Ascending aorta (tissue), 2 donors: ENCODE measurements at regions of chr19 and their contacts with region 1.

Region 1: GRCh38 chr19:35775298-35776110 is at the start of gene ARHGAP33:
- DNase-seq: peak; percentile 96 to 99
- H3K4me3 ChIP-seq: peak within 1 kb of the TSS; percentile 84 to 88
- H3K27ac ChIP-seq: peak within 1 kb of the TSS; percentile 59 to 61
- H3K4me1 ChIP-seq: peaks cover 5 to 14% of the 10 kb centered on the region in 2 donors
- H3K27me3 ChIP-seq: no peaks in the 10 kb centered on the region
- CTCF ChIP-seq: no peak
- total RNA-seq, gene ARHGAP33: 8.7 TPM

Region 2: DNA sequence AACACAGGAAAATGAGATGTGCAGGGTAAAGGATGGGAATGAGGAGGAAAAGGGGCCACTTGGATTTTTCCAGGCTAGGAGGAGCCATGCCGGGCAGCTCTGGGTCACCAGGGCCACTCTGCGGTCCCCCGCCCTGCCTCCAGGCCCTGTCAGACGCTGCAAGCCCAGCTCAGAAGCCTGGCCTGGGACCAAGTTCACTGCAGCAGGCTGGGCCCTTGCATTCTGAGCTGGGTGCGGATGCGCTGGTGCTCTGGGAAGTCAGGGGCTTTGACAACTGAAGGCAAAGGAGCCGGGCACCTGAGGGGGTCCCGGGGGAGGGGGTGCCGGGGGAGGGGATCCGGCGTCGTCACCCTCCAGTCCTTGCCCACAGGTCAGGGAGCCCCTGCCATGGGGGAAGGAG is 1216.5 kb before region 1 on chr19:
- intact Hi-C with region 1: no loop called
- DNase-seq: no peak
- H3K4me3 ChIP-seq: no peak overlapping the region
- H3K27ac ChIP-seq: no peak overlapping the region
- H3K4me1 ChIP-seq: no peaks in the 10 kb centered on the region
- H3K27me3 ChIP-seq: no peaks in the 10 kb centered on the region
- CTCF ChIP-seq: no peak

Region 3: DNA sequence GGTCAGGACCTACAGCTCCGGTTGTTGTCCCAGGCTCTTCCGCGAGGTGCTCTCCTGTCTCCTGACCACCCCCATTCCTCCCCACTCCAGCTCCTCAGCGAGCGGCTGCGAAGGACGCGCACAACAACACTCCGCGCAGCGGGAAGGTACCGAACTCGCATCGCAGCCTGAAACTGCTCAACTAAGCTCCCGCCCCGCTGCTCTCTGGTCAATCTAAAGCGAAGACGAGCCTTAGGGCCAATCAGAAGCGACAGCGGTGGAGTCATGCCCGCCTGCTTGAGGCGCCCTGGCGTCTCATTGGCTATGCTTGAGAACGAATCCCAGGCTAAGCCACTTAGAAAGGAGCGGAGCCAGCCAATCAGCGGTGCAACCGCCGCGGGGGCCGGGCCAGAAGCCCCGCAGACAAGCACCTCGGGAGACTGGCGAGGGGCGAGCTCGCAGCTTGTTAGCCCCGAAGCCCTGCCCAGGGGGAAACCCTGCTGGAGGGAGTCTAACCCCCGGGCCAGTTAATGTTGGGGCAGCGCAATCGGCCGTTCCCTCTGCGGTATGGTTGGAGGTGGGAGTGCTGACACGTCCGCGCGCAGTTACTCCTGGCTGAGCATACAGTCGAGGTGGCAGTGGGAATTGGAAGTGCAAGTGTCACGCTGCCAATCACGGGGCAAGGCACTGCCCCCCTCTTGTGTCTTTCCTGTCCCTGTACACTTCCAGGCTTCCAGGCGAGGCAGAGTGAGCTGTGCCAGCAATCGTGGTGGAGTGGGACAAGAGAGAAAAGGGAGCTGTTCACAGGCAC is 73.1 kb before region 1 on chr19:
- intact Hi-C with region 1: loop called (anchors 5 kb)
- DNase-seq: peak; percentile 94 to 98
- H3K4me3 ChIP-seq: peak overlapping the region; percentile 64 to 65
- H3K27ac ChIP-seq: no peak overlapping the region
- H3K4me1 ChIP-seq: peaks cover 2 to 3% of the 10 kb centered on the region in 2 donors
- H3K27me3 ChIP-seq: no peaks in the 10 kb centered on the region
- CTCF ChIP-seq: no peak

Region 4: GRCh38 chr19:35748106-35749020 is 27.1 kb before region 1 on chr19 and contains the start of gene LIN37:
- intact Hi-C with region 1: loop called (anchors 2 kb)
- DNase-seq: peak; percentile 99 to 100
- H3K4me3 ChIP-seq: peak within 1 kb of the TSS; percentile 82 to 91
- H3K27ac ChIP-seq: peak within 1 kb of the TSS; percentile 75 to 84
- H3K4me1 ChIP-seq: peaks cover 5 to 26% of the 10 kb centered on the region in 2 donors
- H3K27me3 ChIP-seq: no peaks in the 10 kb centered on the region
- CTCF ChIP-seq: no peak
- total RNA-seq, gene LIN37: 29.9 TPM

Region 5: DNA sequence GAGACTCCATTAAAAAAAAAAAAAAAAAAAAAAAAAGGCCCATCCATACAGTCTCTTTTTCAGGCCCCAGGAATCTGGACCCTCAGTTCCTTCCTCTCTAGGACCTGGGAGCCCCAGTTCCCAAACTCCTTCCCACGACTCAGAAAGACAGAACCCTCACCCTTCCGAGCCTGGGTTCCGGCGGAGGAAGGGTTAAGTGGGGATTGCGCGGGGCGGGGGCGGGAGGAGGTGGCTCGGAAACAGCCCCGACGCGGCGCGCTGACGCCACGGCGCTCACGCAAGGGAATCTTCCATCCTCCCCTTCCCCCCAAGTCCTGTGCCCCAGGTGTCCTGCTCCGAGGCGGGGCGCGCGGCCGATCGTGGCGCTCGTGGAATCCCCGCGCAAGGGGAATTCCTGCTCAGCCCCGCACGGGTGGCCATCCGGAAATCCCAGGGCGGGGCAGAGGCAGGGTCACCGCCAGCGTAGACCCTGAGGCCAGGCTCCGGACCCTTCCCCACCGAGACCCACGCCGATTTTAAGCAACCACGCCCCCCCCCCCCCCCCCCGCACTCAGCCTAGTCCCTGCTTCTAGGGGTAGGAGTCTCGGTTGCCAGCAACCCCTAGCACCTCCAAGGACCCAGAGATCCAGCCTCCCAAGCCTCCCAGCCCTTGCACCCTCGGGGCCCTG is 124.2 kb after region 1 on chr19:
- intact Hi-C with region 1: loop called (anchors 10 kb)
- DNase-seq: peak in 1 of 2 donors; percentile 84
- H3K4me3 ChIP-seq: peak overlapping the region; percentile 76 to 84
- H3K27ac ChIP-seq: peak overlapping the region; percentile 74 to 76
- H3K4me1 ChIP-seq: peaks cover 3 to 10% of the 10 kb centered on the region in 2 donors
- H3K27me3 ChIP-seq: no peaks in the 10 kb centered on the region
- CTCF ChIP-seq: no peak

Region 6: GRCh38 chr19:36064826-36065225 is 289.3 kb after region 1 on chr19:
- intact Hi-C with region 1: no loop called
- DNase-seq: no peak
- H3K4me3 ChIP-seq: no peak overlapping the region
- H3K27ac ChIP-seq: no peak overlapping the region
- H3K4me1 ChIP-seq: no peaks in the 10 kb centered on the region
- H3K27me3 ChIP-seq: no peaks in the 10 kb centered on the region
- CTCF ChIP-seq: no peak